ENCODE measurements at regions of chr20 and their contacts with region 1.

Region 1: GRCh38 chr20:64119681-64120341 is 12.4 kb upstream of the NPBWR2 start:
- DNase-seq: no peak
- ATAC-seq: no peak
- H3K4me3 ChIP-seq: peak overlapping the region; percentile 49
- H3K4me3 Mint-ChIP-seq: peak overlapping the region; percentile 60
- H3K27ac ChIP-seq: no peak overlapping the region
- H3K27ac Mint-ChIP-seq: peak overlapping the region; percentile 59
- H3K4me1 ChIP-seq: peaks cover 13% of the 10 kb centered on the region
- H3K4me1 Mint-ChIP-seq: peaks cover 9% of the 10 kb centered on the region
- H3K27me3 ChIP-seq: peaks cover 7% of the 10 kb centered on the region in 2 experiments
- H3K27me3 Mint-ChIP-seq: peaks cover 12% of the 10 kb centered on the region
- CTCF ChIP-seq: no peak

Region 2: GRCh38 chr20:63495741-63496595 is 623.8 kb before region 1 on chr20:
- CTCF ChIA-PET with region 1: no interaction called
- POLR2A ChIA-PET with region 1: no interaction called
- intact Hi-C with region 1: loop called in 1 of 2 experiments (anchors 5 kb)
- DNase-seq: peak; percentile 64 to 88 (median 75)
- ATAC-seq: peak; percentile 68
- H3K4me3 ChIP-seq: peak overlapping the region; percentile 18
- H3K4me3 Mint-ChIP-seq: peak overlapping the region; percentile 45
- H3K27ac ChIP-seq: no peak overlapping the region
- H3K27ac Mint-ChIP-seq: no peak overlapping the region
- H3K4me1 ChIP-seq: peaks cover 33% of the 10 kb centered on the region
- H3K4me1 Mint-ChIP-seq: peaks cover 5% of the 10 kb centered on the region
- H3K27me3 ChIP-seq: peaks cover 30 to 35% of the 10 kb centered on the region in 2 experiments
- H3K27me3 Mint-ChIP-seq: peaks cover 28% of the 10 kb centered on the region
- CTCF ChIP-seq: peak; percentile 93

Region 3: DNA sequence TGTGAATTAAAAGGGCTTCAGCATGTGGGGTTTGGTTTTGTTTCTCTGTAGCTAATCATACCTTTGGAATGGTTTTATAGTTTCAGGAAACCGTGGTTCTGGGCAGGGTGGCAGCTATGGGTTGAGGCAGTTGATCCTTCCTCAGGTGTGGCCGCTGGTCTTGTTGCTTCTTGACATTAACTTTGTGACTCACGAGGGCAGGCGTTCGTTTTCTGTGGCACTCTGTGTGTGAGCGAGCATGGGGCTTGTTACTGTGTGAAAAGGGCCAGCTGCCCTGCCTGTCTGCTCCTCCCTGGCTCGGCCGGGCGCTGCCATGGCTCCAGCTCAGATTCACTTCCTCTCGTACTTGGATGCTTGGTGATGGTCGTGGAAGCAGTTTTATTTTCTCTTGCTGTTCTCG is 208.6 kb before region 1 on chr20:
- CTCF ChIA-PET with region 1: no interaction called
- POLR2A ChIA-PET with region 1: no interaction called
- intact Hi-C with region 1: loop called in 1 of 2 experiments (anchors 5 kb)
- DNase-seq: peak in 2 of 14 experiments; percentile 20 to 41
- ATAC-seq: no peak
- H3K4me3 ChIP-seq: no peak overlapping the region
- H3K4me3 Mint-ChIP-seq: peak overlapping the region; percentile 9
- H3K27ac ChIP-seq: no peak overlapping the region
- H3K27ac Mint-ChIP-seq: peak overlapping the region; percentile 56
- H3K4me1 ChIP-seq: peaks cover 41% of the 10 kb centered on the region
- H3K4me1 Mint-ChIP-seq: peaks cover 32% of the 10 kb centered on the region
- H3K27me3 ChIP-seq: no peaks in the 10 kb centered on the region
- H3K27me3 Mint-ChIP-seq: no peaks in the 10 kb centered on the region
- CTCF ChIP-seq: no peak

Region 4: GRCh38 chr20:64038565-64039292 is 81.1 kb before region 1 on chr20:
- CTCF ChIA-PET with region 1: interaction called, 15 read pairs
- POLR2A ChIA-PET with region 1: interaction called, 10 read pairs
- intact Hi-C with region 1: loop called (anchors 1 kb)
- DNase-seq: peak; percentile 61 to 88 (median 78)
- ATAC-seq: peak; percentile 82
- H3K4me3 ChIP-seq: peak overlapping the region; percentile 49
- H3K4me3 Mint-ChIP-seq: peak overlapping the region; percentile 75
- H3K27ac ChIP-seq: peak overlapping the region in 1 of 2 donors; percentile 13
- H3K27ac Mint-ChIP-seq: no peak overlapping the region
- H3K4me1 ChIP-seq: peaks cover 85% of the 10 kb centered on the region
- H3K4me1 Mint-ChIP-seq: peaks cover 39% of the 10 kb centered on the region
- H3K27me3 ChIP-seq: peaks cover 0 to 4% of the 10 kb centered on the region in 2 experiments
- H3K27me3 Mint-ChIP-seq: no peaks in the 10 kb centered on the region
- CTCF ChIP-seq: peak; percentile 93

Region 5: DNA sequence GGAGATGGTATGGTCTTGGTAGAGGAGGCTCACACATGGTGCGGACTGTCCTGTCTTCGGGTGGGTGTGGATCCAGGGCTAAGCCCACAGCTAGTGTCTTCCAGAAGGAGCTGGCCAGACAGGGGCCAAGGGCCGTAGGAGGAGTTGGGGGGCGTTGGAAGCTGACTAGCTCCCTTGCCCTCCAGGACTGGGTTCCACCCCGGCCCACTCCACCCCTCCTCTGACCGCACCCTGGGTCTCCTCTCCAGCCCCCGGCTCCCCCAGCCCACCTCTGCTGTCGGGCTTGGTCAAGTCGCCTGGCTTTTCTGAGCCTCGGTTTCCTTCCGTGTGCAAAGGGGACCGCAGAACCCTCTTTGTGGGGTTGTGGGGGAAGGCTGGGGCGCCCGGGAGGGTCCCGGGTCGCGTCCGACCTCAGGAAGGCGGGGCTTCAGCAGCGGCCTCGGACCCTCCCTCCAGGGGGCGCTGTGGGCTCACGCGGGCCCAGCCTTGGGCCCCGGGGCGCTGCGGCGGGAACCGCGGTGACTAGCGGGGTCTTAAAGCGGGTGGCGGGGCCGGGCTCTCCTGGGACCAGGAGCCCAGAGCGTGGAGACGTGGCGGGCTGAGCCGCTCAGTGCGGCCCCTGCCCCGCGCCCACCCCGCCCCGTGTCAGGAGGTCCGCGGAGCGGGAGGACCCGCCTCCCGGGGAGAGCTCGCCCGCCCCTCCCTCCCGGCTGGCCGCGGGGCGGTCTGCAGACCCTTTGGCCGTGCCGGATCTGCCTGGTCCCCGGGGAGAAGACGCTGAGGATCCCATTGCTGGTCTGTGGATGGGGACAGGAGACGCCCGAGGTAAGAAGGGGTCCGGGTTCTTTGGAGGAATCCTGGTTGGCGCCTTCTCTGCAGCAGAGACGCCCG is 17.8 kb before region 1 on chr20:
- CTCF ChIA-PET with region 1: interaction called, 4 read pairs
- POLR2A ChIA-PET with region 1: no interaction called
- intact Hi-C with region 1: loop called in 1 of 2 experiments (anchors 1 kb)
- DNase-seq: peak; percentile 51 to 84 (median 62)
- ATAC-seq: peak; percentile 35
- H3K4me3 ChIP-seq: peak overlapping the region; percentile 16
- H3K4me3 Mint-ChIP-seq: peak overlapping the region; percentile 36
- H3K27ac ChIP-seq: no peak overlapping the region
- H3K27ac Mint-ChIP-seq: peak overlapping the region; percentile 90
- H3K4me1 ChIP-seq: peaks cover 27% of the 10 kb centered on the region
- H3K4me1 Mint-ChIP-seq: peaks cover 24% of the 10 kb centered on the region
- H3K27me3 ChIP-seq: peaks cover 23 to 24% of the 10 kb centered on the region in 2 experiments
- H3K27me3 Mint-ChIP-seq: peaks cover 26% of the 10 kb centered on the region
- CTCF ChIP-seq: peak; percentile 73

Region 6: DNA sequence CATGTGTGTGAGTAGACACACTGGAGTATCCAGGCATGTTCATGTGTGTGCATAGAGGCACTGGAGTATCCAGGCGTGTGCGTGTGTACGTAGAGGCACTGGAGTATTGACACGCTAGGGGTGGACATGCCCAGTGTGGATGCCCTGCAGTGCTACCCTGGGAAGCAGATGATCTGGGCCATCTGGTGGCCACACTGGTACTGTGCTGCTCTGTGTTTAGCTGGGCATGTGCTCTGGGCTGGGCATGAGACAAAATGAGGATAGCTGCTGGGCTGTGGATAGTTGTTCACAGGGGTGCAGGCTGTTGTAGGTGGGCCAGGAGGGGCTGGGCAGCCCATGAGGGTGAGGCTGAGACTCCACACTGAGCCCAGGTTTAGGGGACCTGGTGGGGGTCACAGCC is 11.6 kb after region 1 on chr20:
- CTCF ChIA-PET with region 1: no interaction called
- POLR2A ChIA-PET with region 1: no interaction called
- intact Hi-C with region 1: no loop called
- DNase-seq: no peak
- ATAC-seq: no peak
- H3K4me3 ChIP-seq: no peak overlapping the region
- H3K4me3 Mint-ChIP-seq: no peak overlapping the region
- H3K27ac ChIP-seq: no peak overlapping the region
- H3K27ac Mint-ChIP-seq: no peak overlapping the region
- H3K4me1 ChIP-seq: no peaks in the 10 kb centered on the region
- H3K4me1 Mint-ChIP-seq: no peaks in the 10 kb centered on the region
- H3K27me3 ChIP-seq: peaks cover 6 to 8% of the 10 kb centered on the region in 2 experiments
- H3K27me3 Mint-ChIP-seq: peaks cover 41% of the 10 kb centered on the region
- CTCF ChIP-seq: no peak

Region 7: GRCh38 chr20:64176548-64176947 is 56.7 kb after region 1 on chr20:
- CTCF ChIA-PET with region 1: no interaction called
- POLR2A ChIA-PET with region 1: no interaction called
- intact Hi-C with region 1: no loop called
- DNase-seq: no peak
- ATAC-seq: no peak
- H3K4me3 ChIP-seq: no peak overlapping the region
- H3K4me3 Mint-ChIP-seq: no peak overlapping the region
- H3K27ac ChIP-seq: no peak overlapping the region
- H3K27ac Mint-ChIP-seq: no peak overlapping the region
- H3K4me1 ChIP-seq: peaks cover 6% of the 10 kb centered on the region
- H3K4me1 Mint-ChIP-seq: peaks cover 8% of the 10 kb centered on the region
- H3K27me3 ChIP-seq: peaks cover 7 to 16% of the 10 kb centered on the region in 2 experiments
- H3K27me3 Mint-ChIP-seq: peaks cover 15% of the 10 kb centered on the region
- CTCF ChIP-seq: no peak

Measured in CD4-positive, alpha-beta T cell (primary cell).